CD4-positive, alpha-beta memory T cell (primary cell): ENCODE measurements at regions of chr1 and their contacts with region 1.

Region 1: DNA sequence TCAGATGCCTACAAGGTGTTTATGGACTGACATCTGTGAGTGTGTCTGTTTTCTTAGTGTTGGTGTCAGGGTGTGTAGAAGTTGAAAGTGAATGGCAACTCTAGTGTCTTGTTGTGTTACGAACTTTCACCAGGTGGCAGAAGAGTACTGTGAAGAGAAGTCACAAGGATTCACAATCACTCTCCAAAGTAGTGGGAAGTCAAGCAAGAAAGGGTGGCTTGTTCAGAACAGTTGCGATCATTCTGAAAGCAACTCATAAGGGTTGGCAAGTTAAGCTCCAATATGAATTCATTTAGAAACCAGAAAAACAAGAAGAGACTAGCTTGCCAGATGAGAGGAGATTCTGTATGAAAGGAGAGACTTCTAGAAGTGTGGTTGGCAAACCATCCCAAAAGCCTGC is 86.1 kb downstream of the FASLG start:
- DNase-seq: peak; percentile 46 to 62 (median 59)
- H3K4me3 ChIP-seq: no peak overlapping the region
- H3K4me3 Mint-ChIP-seq: peak overlapping the region in 5 of 8 donors; percentile 46 to 81 (median 64)
- H3K27ac ChIP-seq: no peak overlapping the region
- H3K27ac Mint-ChIP-seq: peak overlapping the region in 6 of 7 donors; percentile 1 to 57 (median 22)
- H3K4me1 ChIP-seq: peaks cover 32% of the 10 kb centered on the region
- H3K4me1 Mint-ChIP-seq: peaks cover 29 to 38% (median 33%) of the 10 kb centered on the region in 4 donors
- H3K27me3 ChIP-seq: no peaks in the 10 kb centered on the region
- H3K27me3 Mint-ChIP-seq: peaks cover 0 to 3% of the 10 kb centered on the region in 2 donors

Region 2: GRCh38 chr1:172778456-172779455 is 33.7 kb after region 1 on chr1:
- CTCF ChIA-PET with region 1: interaction called, 18 read pairs
- POLR2A ChIA-PET with region 1: interaction called, 3 read pairs
- intact Hi-C with region 1: no loop called
- DNase-seq: peak in 4 of 5 donors; percentile 19 to 37 (median 28)
- H3K4me3 ChIP-seq: no peak overlapping the region
- H3K4me3 Mint-ChIP-seq: peak overlapping the region; percentile 42 to 83 (median 62)
- H3K27ac ChIP-seq: no peak overlapping the region
- H3K27ac Mint-ChIP-seq: peak overlapping the region in 4 of 7 donors; percentile 27 to 54 (median 40)
- H3K4me1 ChIP-seq: peaks cover 11% of the 10 kb centered on the region
- H3K4me1 Mint-ChIP-seq: peaks cover 7 to 18% (median 14%) of the 10 kb centered on the region in 4 donors
- H3K27me3 ChIP-seq: no peaks in the 10 kb centered on the region
- H3K27me3 Mint-ChIP-seq: no peaks in the 10 kb centered on the region

Region 3: GRCh38 chr1:173202430-173203145 is 457.6 kb after region 1 on chr1:
- CTCF ChIA-PET with region 1: interaction called, 242 read pairs
- POLR2A ChIA-PET with region 1: interaction called, 16 read pairs
- intact Hi-C with region 1: loop called (anchors 1 kb)
- DNase-seq: no peak
- H3K4me3 ChIP-seq: no peak overlapping the region
- H3K4me3 Mint-ChIP-seq: no peak overlapping the region
- H3K27ac ChIP-seq: no peak overlapping the region
- H3K27ac Mint-ChIP-seq: peak overlapping the region in 3 of 7 donors; percentile 3 to 88 (median 66)
- H3K4me1 ChIP-seq: peaks cover 41% of the 10 kb centered on the region
- H3K4me1 Mint-ChIP-seq: peaks cover 31 to 47% (median 37%) of the 10 kb centered on the region in 4 donors
- H3K27me3 ChIP-seq: no peaks in the 10 kb centered on the region
- H3K27me3 Mint-ChIP-seq: no peaks in the 10 kb centered on the region

Region 4: GRCh38 chr1:173429471-173430402 is 684.7 kb after region 1 on chr1:
- CTCF ChIA-PET with region 1: interaction called, 52 read pairs
- POLR2A ChIA-PET with region 1: no interaction called
- intact Hi-C with region 1: loop called (anchors 1 kb)
- DNase-seq: peak; percentile 50 to 62 (median 59)
- H3K4me3 ChIP-seq: peak overlapping the region in 1 of 2 donors; percentile 26
- H3K4me3 Mint-ChIP-seq: peak overlapping the region; percentile 14 to 76 (median 60)
- H3K27ac ChIP-seq: peak overlapping the region; percentile 11
- H3K27ac Mint-ChIP-seq: peak overlapping the region; percentile 22 to 87 (median 75)
- H3K4me1 ChIP-seq: peaks cover 17% of the 10 kb centered on the region
- H3K4me1 Mint-ChIP-seq: peaks cover 16 to 26% (median 16%) of the 10 kb centered on the region in 4 donors
- H3K27me3 ChIP-seq: no peaks in the 10 kb centered on the region
- H3K27me3 Mint-ChIP-seq: no peaks in the 10 kb centered on the region

Region 5: DNA sequence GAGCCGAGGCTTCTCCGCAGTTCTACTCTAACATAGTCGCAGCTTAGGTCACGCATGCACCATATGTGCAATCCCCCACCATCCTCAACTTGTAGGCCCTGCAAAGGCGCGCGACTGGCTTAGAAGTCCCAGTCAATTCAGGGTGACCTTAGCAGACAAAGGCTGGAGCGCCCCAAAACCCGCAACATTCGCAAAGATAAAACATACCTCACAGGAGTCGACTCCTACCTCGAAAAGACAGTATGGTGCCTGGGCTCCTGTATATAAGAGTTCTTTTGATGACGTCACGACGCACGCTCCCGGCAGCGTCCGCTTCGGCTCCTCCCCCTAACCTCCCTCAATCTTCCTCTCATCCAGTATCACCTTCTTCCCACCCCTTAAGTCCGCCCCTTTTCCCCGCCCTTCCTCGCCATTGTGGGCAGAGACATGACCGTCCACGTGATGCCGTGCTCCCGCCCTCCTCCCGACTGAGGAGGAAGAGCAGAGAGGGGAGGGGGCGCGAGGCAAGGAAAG is 1122.8 kb after region 1 on chr1 and contains the start of gene GAS5:
- CTCF ChIA-PET with region 1: interaction called, 4 read pairs
- POLR2A ChIA-PET with region 1: no interaction called
- intact Hi-C with region 1: loop called (anchors 5 kb)
- DNase-seq: peak; percentile 98 to 100 (median 99)
- H3K4me3 ChIP-seq: peak within 1 kb of the TSS; percentile 71 to 79
- H3K4me3 Mint-ChIP-seq: peak within 1 kb of the TSS; percentile 95 to 99 (median 96)
- H3K27ac ChIP-seq: peak within 1 kb of the TSS; percentile 89
- H3K27ac Mint-ChIP-seq: peak within 1 kb of the TSS; percentile 94 to 99 (median 97)
- H3K4me1 ChIP-seq: peaks cover 84% of the 10 kb centered on the region
- H3K4me1 Mint-ChIP-seq: peaks cover 52 to 92% (median 63%) of the 10 kb centered on the region in 4 donors
- H3K27me3 ChIP-seq: no peaks in the 10 kb centered on the region
- H3K27me3 Mint-ChIP-seq: no peaks in the 10 kb centered on the region
- total RNA-seq, gene GAS5: 676 to 709 TPM

Region 6: DNA sequence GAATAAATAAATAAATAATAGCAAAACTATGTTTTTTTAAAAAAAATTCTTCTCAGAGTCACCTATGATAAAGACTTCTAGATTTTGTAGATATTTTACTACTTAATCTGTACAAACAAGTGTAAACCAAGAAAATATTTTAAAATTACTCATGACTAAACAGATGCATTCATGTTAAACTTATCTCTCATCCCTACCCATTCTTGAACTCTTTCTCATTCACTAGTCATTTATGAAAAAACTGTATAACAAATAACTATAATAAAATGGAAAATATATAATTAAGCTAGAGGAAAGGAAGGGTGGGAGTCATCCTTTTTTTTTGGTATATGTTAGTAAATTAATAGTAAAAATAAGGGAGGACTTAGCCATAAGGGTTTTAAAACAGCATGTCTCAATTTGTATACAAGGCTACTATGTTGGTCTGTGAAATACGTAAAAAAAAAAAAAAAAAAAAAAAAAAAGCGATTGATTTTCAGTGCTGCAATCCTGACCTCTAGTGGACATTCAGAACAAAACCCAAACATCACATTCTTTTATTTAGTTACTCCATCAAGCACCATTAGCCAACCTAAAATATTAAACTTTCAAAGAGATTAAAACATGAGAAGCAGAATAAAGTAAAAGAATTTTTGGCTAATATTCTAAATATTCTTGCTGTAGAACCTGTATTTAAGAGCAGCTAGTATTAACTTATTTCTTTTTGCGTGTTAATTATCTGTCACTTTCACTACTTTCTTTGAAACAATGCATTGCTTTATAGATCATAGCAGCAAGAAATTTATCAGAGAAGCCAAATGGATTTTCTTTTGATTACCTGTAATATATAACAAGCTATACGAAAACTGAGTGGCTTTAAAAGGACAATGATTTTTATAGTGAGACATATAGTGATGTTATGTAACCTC is 1998.9 kb after region 1 on chr1:
- CTCF ChIA-PET with region 1: interaction called, 6 read pairs
- POLR2A ChIA-PET with region 1: no interaction called
- intact Hi-C with region 1: loop called (anchors 1 kb)
- DNase-seq: peak in 4 of 5 donors; percentile 42 to 47 (median 44)
- H3K4me3 ChIP-seq: no peak overlapping the region
- H3K4me3 Mint-ChIP-seq: no peak overlapping the region
- H3K27ac ChIP-seq: no peak overlapping the region
- H3K27ac Mint-ChIP-seq: peak overlapping the region in 2 of 7 donors; percentile 60
- H3K4me1 ChIP-seq: no peaks in the 10 kb centered on the region
- H3K4me1 Mint-ChIP-seq: peaks cover 0 to 7% (median 0%) of the 10 kb centered on the region in 4 donors
- H3K27me3 ChIP-seq: no peaks in the 10 kb centered on the region
- H3K27me3 Mint-ChIP-seq: no peaks in the 10 kb centered on the region